ENCODE measurements at regions of chr12 and their contacts with region 1.

Region 1: GRCh38 chr12:50103767-50104321 is at the start of gene GPD1:
- DNase-seq: no peak
- H3K4me3 ChIP-seq: no peak within 1 kb of the TSS
- H3K27ac ChIP-seq: no peak within 1 kb of the TSS
- H3K27me3 ChIP-seq: peaks cover 5% of the 10 kb centered on the region
- CTCF ChIP-seq: no peak
- polyA plus RNA-seq, gene GPD1: 0.04 and 0.05 TPM in 2 replicates

Region 2: DNA sequence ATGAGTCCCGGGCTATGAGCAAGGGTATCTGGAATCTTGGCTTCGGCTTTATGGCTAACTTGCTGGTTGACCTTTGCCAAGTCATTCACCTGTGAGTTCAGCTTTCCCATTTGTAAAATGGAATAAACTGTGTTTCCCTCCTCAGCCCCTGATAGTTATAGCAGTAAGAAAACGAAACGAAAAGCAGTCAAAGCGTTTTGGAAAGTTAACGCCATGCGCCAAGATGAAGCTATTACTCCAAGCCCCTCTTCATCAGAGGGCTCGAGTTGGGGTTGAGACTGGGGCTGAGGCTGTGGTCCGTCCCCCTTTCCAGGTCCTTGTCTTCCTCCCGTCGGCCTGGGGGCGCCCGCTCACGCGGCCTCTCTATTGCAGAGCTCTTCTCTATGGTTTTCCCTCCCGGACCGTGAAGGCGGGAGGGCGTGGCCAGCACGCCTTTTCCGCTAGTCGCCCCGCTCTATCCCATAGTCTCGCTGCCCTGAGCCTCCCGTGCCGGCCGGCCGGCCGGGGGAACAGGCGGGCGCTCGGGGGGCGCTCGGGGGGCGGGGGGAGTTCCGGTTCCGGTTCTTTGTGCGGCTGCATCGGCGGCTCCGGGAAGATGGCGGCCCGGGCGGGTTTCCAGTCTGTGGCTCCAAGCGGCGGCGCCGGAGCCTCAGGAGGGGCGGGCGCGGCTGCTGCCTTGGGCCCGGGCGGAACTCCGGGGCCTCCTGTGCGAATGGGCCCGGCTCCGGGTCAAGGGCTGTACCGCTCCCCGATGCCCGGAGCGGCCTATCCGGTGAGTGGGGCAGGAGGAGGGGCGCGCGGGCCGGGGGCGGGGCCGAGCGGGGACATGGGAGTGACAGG is 18.8 kb before region 1 on chr12 and contains the start of gene SMARCD1:
- CTCF ChIA-PET with region 1: interaction called, 28 read pairs
- POLR2A ChIA-PET with region 1: interaction called, 3 read pairs
- DNase-seq: peak; percentile 81
- H3K4me3 ChIP-seq: peak within 1 kb of the TSS; percentile 82
- H3K27ac ChIP-seq: peak within 1 kb of the TSS; percentile 87
- H3K27me3 ChIP-seq: no peaks in the 10 kb centered on the region
- CTCF ChIP-seq: peak; percentile 53
- polyA plus RNA-seq, gene SMARCD1: 57.2 and 65.1 TPM in 2 replicates

Region 3: DNA sequence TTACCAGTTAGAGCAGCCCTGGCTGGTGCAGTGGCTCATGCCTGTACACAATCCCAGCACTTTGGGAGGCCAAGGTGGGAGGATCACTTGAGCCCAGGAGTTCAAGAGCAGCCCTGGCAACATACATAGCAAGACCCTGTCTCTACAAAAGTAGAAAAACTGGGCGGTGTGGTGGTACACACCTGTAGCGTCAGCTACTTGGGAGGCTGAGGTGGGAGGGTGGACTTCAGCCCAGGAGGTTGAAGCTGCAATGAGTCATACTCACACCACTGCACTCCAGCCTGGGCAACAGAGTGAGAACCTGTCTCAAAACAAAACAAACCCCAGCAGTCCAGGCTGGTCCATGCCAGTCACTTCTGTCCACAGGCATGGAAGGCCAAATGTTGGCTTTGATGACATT is 15.5 kb after region 1 on chr12:
- CTCF ChIA-PET with region 1: no interaction called
- POLR2A ChIA-PET with region 1: no interaction called
- DNase-seq: no peak
- H3K4me3 ChIP-seq: no peak overlapping the region
- H3K27ac ChIP-seq: no peak overlapping the region
- H3K27me3 ChIP-seq: no peaks in the 10 kb centered on the region
- CTCF ChIP-seq: no peak

Measured in AG04450 (cell line).